GM12878 (cell line): ENCODE measurements at regions of chr17 and their contacts with region 1.

Region 1: DNA sequence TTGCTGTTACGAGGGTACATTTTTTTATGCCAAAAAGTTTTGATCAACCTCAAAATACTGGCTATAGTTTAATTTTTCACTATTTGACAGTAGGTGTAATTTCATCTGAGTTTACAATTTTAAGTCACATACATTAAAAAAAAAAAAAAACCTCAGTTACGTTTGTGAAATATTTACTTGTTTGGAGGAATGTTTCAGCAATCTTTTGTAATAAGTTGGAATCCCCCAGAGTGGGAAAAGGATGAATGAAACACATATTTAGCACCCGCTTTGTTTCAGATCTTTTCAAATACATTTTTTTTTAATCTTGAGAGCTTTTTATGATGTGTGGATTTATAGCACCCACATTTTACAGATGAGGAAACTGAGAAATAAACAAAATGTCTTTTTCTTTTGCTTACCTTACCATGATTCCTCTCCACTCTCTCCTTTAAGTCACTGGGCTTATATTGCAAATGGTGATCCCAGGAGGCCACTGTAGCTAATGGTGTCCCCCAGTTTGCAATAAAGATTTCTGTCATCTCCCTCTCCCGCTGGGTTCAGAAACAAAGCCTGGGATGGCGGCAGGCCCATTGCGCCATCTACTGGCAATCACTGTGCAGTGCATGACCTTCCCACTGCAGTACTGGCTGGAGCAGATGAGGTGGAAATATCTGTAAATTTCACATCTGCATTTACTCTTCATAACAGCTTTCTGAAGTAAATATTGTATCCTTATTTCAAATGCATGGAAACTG is 27.7 kb downstream of the TBC1D3B start:
- DNase-seq: peak; percentile 57
- ATAC-seq: peak; percentile 97
- H3K4me3 ChIP-seq: no peak overlapping the region
- H3K27ac ChIP-seq: no peak overlapping the region
- H3K4me1 ChIP-seq: peaks cover 8% of the 10 kb centered on the region
- H3K27me3 ChIP-seq: no peaks in the 10 kb centered on the region
- CTCF ChIP-seq: peak; percentile 99; a peak in 5 of 6 replicates
- EP300 ChIP-seq: no peak
- POLR2A ChIP-seq: no peak
- RAD21 ChIP-seq: peak; percentile 100

Region 2: GRCh38 chr17:35915153-35915969 is 233.4 kb before region 1 on chr17:
- CTCF ChIA-PET with region 1: no interaction called
- POLR2A ChIA-PET with region 1: no interaction called
- RAD21 ChIA-PET with region 1: no interaction called
- SMC1A ChIA-PET with region 1: no interaction called
- in situ Hi-C with region 1: no loop called
- intact Hi-C with region 1: no loop called
- DNase-seq: no peak
- ATAC-seq: no peak
- H3K4me3 ChIP-seq: no peak overlapping the region
- H3K27ac ChIP-seq: no peak overlapping the region
- H3K4me1 ChIP-seq: no peaks in the 10 kb centered on the region
- H3K27me3 ChIP-seq: no peaks in the 10 kb centered on the region
- CTCF ChIP-seq: no peak
- EP300 ChIP-seq: no peak
- POLR2A ChIP-seq: no peak
- RAD21 ChIP-seq: no peak

Region 3: GRCh38 chr17:35953720-35954119 is 195.0 kb before region 1 on chr17:
- CTCF ChIA-PET with region 1: interaction called, 18 read pairs
- POLR2A ChIA-PET with region 1: no interaction called
- RAD21 ChIA-PET with region 1: interaction called, 7 read pairs
- SMC1A ChIA-PET with region 1: interaction called, 6 read pairs
- in situ Hi-C with region 1: no loop called
- intact Hi-C with region 1: no loop called
- DNase-seq: no peak
- ATAC-seq: no peak
- H3K4me3 ChIP-seq: no peak overlapping the region
- H3K27ac ChIP-seq: no peak overlapping the region
- H3K4me1 ChIP-seq: no peaks in the 10 kb centered on the region
- H3K27me3 ChIP-seq: no peaks in the 10 kb centered on the region; a peak in 1 of 4 replicates
- CTCF ChIP-seq: no peak
- EP300 ChIP-seq: no peak
- POLR2A ChIP-seq: no peak
- RAD21 ChIP-seq: no peak

Region 4: DNA sequence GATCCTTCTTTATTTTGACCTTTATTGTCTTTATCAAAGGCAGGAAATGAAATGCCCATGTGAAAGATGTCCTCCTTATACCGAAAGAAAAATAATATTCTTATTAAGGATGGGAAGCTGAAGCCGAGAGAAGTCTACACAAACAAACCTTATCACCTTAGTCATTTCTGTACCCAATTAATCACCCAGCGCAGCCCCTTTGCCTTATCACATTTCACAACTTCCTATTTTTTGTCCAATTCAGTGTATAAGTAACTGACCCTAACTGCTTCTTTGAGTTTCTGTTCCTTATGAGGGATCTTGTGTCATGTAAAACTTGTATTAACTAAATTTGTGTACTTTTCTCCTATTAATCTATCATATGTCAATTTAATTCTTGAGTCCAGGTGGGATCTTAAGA is 114.6 kb before region 1 on chr17:
- CTCF ChIA-PET with region 1: interaction called, 13 read pairs
- POLR2A ChIA-PET with region 1: no interaction called
- RAD21 ChIA-PET with region 1: interaction called, 3 read pairs
- SMC1A ChIA-PET with region 1: interaction called, 6 read pairs
- in situ Hi-C with region 1: no loop called
- intact Hi-C with region 1: no loop called
- DNase-seq: peak; percentile 62
- ATAC-seq: peak; percentile 94
- H3K4me3 ChIP-seq: no peak overlapping the region
- H3K27ac ChIP-seq: no peak overlapping the region
- H3K4me1 ChIP-seq: peaks cover 5% of the 10 kb centered on the region; the same call in 1 of the 2 replicates
- H3K27me3 ChIP-seq: no peaks in the 10 kb centered on the region
- CTCF ChIP-seq: no peak
- EP300 ChIP-seq: peak; percentile 87 to 96
- POLR2A ChIP-seq: no peak
- RAD21 ChIP-seq: no peak

Region 5: DNA sequence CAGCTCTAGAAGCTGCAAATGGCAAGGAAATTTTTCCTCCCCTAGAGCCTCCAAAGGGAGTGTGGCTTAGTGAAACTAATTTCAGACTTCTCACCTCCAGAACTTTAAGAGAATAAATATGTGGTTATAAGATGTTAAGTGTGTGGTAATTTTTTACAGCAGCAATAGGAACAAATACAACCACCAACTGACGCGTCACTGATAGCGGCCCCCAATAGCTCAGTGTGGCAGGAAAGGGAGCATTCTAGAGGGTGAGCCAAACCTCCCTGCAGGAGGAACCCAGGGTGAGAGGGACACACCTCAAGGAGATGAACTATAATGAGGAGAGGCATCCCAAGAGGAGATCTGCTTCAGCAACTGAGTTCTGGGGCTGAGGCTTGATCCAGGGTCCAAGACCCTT is 41.1 kb before region 1 on chr17:
- CTCF ChIA-PET with region 1: interaction called, 23 read pairs
- POLR2A ChIA-PET with region 1: interaction called, 4 read pairs
- RAD21 ChIA-PET with region 1: interaction called, 11 read pairs
- SMC1A ChIA-PET with region 1: interaction called, 39 read pairs
- in situ Hi-C with region 1: no loop called
- intact Hi-C with region 1: no loop called
- DNase-seq: no peak
- ATAC-seq: no peak
- H3K4me3 ChIP-seq: no peak overlapping the region
- H3K27ac ChIP-seq: no peak overlapping the region
- H3K4me1 ChIP-seq: peaks cover 13% of the 10 kb centered on the region
- H3K27me3 ChIP-seq: no peaks in the 10 kb centered on the region
- CTCF ChIP-seq: no peak
- EP300 ChIP-seq: no peak
- POLR2A ChIP-seq: no peak
- RAD21 ChIP-seq: no peak

Region 6: DNA sequence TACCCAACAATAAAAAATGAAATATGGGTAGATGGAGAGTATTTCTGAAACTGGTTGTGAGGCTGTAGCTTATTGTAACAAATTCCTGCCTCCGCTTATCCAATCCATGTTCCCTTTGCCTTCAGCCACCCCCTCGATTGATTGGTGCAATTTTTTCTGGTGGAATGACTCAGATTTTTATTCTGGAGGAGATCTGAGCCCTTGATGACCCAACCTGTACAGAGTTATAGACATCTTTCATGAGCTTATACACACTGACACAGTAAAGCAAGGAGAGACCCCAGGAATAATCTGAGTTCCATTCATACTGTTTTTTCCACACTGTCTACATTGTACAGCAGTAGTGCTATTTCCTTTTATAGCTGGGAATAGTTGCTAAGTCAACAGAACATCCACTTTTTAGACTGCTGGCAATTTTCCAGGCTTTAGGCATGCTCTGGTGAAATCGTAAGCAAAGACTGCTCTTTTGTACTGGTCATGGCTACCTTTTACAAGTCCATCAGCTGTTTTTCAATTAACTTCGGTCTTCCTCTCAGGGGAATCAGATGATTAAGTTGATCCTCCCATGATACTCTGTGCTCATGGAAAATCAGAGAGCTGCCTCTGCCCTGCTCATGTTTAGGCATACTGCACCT is 15.0 kb before region 1 on chr17:
- CTCF ChIA-PET with region 1: interaction called, 28 read pairs
- POLR2A ChIA-PET with region 1: interaction called, 14 read pairs
- RAD21 ChIA-PET with region 1: interaction called, 28 read pairs
- SMC1A ChIA-PET with region 1: interaction called, 118 read pairs
- in situ Hi-C with region 1: no loop called
- intact Hi-C with region 1: no loop called
- DNase-seq: no peak
- ATAC-seq: no peak
- H3K4me3 ChIP-seq: no peak overlapping the region
- H3K27ac ChIP-seq: no peak overlapping the region
- H3K4me1 ChIP-seq: peaks cover 29% of the 10 kb centered on the region
- H3K27me3 ChIP-seq: no peaks in the 10 kb centered on the region
- CTCF ChIP-seq: no peak
- EP300 ChIP-seq: no peak
- POLR2A ChIP-seq: no peak
- RAD21 ChIP-seq: no peak

Region 7: GRCh38 chr17:36183001-36183971 is 34.6 kb after region 1 on chr17:
- CTCF ChIA-PET with region 1: no interaction called
- POLR2A ChIA-PET with region 1: no interaction called
- RAD21 ChIA-PET with region 1: no interaction called
- SMC1A ChIA-PET with region 1: no interaction called
- in situ Hi-C with region 1: no loop called
- intact Hi-C with region 1: no loop called
- DNase-seq: no peak
- ATAC-seq: peak; percentile 83
- H3K4me3 ChIP-seq: no peak overlapping the region; the same call in 1 of the 2 replicates
- H3K27ac ChIP-seq: no peak overlapping the region
- H3K4me1 ChIP-seq: no peaks in the 10 kb centered on the region
- H3K27me3 ChIP-seq: no peaks in the 10 kb centered on the region
- CTCF ChIP-seq: no peak
- EP300 ChIP-seq: no peak
- POLR2A ChIP-seq: no peak
- RAD21 ChIP-seq: no peak